Heart left ventricle (tissue), 16 donors: ENCODE measurements at regions of chr18 and their contacts with region 1.

Region 1: DNA sequence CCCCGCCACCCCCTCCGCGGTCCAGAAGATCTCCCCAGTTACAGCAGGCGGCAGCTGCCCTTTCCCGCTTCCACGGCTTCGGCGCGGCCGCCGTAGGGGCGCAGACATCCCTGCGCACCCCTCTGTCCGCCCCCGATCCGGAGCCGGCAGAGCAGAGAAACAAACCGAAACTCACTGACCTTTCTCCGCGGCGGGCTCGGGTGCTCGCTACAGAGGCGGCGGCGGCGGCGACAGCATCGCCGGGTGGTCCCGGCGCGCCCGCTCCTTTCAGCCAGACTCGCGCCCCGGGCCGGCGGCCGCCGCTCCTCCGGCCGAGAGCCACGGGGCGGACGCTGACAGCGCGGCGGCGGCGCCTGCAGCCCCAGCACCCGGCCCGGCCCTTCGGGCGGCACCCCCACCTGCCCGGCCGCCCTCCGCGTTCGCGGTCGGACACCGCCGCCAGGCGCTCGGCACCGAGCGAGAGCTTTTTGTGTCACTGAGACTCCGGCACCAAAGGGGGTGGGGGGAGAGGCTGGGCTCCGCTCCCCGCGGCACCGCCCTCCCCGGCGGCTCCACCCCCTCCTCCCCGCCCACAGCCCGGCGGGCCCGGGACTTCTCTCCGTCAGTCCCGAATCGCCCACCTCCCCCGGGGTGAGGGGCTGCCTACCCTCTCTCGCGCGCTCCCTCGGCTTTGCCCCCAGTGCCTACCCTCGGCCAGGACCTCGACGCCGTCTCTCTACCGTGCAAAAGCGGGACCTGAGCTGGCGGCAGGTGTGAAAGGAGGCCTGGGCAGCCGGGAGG is 1.4 kb upstream of the RNF152 start:
- DNase-seq: peak; percentile 87 to 92 (median 89)
- ATAC-seq: peak; percentile 92 to 95 (median 94)
- H3K4me3 ChIP-seq: peak overlapping the region; percentile 74 to 99 (median 93)
- H3K27ac ChIP-seq: peak overlapping the region; percentile 80 to 97 (median 90)
- H3K4me1 ChIP-seq: peaks cover 0 to 43% (median 8%) of the 10 kb centered on the region in 12 donors
- H3K27me3 ChIP-seq: peaks cover 0 to 38% (median 0%) of the 10 kb centered on the region in 9 donors
- CTCF ChIP-seq: peak; percentile 7 to 67 (median 46)
- POLR2A ChIP-seq: peak in 1 of 2 donors; percentile 70

Region 2: DNA sequence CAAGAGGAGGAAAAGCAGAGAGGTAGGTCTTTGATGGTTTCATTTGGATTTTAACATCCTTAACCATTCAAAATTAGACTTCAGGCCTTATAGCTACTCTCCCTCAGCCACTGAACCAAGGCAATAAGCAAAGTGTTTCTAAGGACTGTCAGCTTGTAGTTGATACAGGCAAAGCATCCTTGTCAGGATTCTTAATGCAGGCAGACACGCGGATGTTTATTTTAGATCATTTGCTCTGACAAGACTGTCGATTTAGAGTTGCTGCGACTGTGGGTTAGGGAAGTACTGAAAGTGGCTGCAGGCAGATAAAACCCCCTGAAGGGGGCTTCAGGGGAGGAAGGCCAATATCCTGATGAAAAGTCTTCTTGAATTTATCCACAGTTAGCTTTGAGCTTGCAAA is 514.3 kb before region 1 on chr18:
- intact Hi-C with region 1: no loop called
- DNase-seq: no peak
- ATAC-seq: no peak
- H3K4me3 ChIP-seq: no peak overlapping the region
- H3K27ac ChIP-seq: no peak overlapping the region
- H3K4me1 ChIP-seq: no peaks in the 10 kb centered on the region
- H3K27me3 ChIP-seq: no peaks in the 10 kb centered on the region
- CTCF ChIP-seq: no peak
- POLR2A ChIP-seq: no peak

Region 3: DNA sequence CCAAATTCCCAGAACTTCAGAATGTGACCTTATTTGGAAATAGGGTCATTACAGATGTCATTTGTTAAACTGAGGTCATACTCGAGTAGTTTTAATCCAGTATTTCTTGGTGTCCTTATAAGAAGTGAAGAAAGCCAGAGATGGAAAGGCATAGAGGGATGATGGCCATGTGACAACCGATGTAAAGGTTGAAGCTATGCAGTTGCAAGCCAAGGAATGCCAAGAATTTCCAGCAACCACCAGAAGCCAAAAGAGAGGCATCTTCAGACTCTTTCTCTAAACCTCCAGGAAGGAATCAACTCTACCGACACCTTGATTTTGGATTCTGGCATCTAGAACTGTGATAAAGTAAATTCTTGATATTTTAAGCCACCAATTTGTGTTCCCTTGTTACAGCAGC is 318.7 kb before region 1 on chr18:
- intact Hi-C with region 1: loop called in 5 of 10 experiments (anchors 5 to 10 kb)
- DNase-seq: no peak
- ATAC-seq: no peak
- H3K4me3 ChIP-seq: no peak overlapping the region
- H3K27ac ChIP-seq: no peak overlapping the region
- H3K4me1 ChIP-seq: peaks cover 0 to 17% (median 7%) of the 10 kb centered on the region in 12 donors
- H3K27me3 ChIP-seq: no peaks in the 10 kb centered on the region
- CTCF ChIP-seq: no peak
- POLR2A ChIP-seq: no peak

Region 4: GRCh38 chr18:61635901-61636528 is 258.1 kb before region 1 on chr18:
- intact Hi-C with region 1: loop called in 8 of 10 experiments (anchors 1 to 5 kb)
- DNase-seq: peak; percentile 35 to 64 (median 50)
- ATAC-seq: peak; percentile 51 to 87 (median 80)
- H3K4me3 ChIP-seq: no peak overlapping the region
- H3K27ac ChIP-seq: peak overlapping the region in 10 of 12 donors; percentile 8 to 73 (median 36)
- H3K4me1 ChIP-seq: peaks cover 0 to 14% (median 6%) of the 10 kb centered on the region in 12 donors
- H3K27me3 ChIP-seq: no peaks in the 10 kb centered on the region
- CTCF ChIP-seq: peak; percentile 74 to 93 (median 87)
- POLR2A ChIP-seq: no peak

Region 5: GRCh38 chr18:61731693-61732376 is 162.3 kb before region 1 on chr18:
- intact Hi-C with region 1: loop called in 1 of 10 experiments (anchors 5 kb)
- DNase-seq: peak in 4 of 5 donors; percentile 33 to 41 (median 38)
- ATAC-seq: peak; percentile 68 to 71 (median 68)
- H3K4me3 ChIP-seq: no peak overlapping the region
- H3K27ac ChIP-seq: peak overlapping the region; percentile 51 to 93 (median 79)
- H3K4me1 ChIP-seq: peaks cover 0 to 37% (median 13%) of the 10 kb centered on the region in 12 donors
- H3K27me3 ChIP-seq: peaks cover 0 to 2% (median 0%) of the 10 kb centered on the region in 9 donors
- CTCF ChIP-seq: no peak
- POLR2A ChIP-seq: no peak

Region 6: GRCh38 chr18:61755555-61755954 is 138.6 kb before region 1 on chr18:
- intact Hi-C with region 1: loop called in 1 of 10 experiments (anchors 5 kb)
- DNase-seq: no peak
- ATAC-seq: no peak
- H3K4me3 ChIP-seq: no peak overlapping the region
- H3K27ac ChIP-seq: no peak overlapping the region
- H3K4me1 ChIP-seq: peaks cover 0 to 24% (median 7%) of the 10 kb centered on the region in 12 donors
- H3K27me3 ChIP-seq: no peaks in the 10 kb centered on the region
- CTCF ChIP-seq: no peak
- POLR2A ChIP-seq: no peak

Region 7: DNA sequence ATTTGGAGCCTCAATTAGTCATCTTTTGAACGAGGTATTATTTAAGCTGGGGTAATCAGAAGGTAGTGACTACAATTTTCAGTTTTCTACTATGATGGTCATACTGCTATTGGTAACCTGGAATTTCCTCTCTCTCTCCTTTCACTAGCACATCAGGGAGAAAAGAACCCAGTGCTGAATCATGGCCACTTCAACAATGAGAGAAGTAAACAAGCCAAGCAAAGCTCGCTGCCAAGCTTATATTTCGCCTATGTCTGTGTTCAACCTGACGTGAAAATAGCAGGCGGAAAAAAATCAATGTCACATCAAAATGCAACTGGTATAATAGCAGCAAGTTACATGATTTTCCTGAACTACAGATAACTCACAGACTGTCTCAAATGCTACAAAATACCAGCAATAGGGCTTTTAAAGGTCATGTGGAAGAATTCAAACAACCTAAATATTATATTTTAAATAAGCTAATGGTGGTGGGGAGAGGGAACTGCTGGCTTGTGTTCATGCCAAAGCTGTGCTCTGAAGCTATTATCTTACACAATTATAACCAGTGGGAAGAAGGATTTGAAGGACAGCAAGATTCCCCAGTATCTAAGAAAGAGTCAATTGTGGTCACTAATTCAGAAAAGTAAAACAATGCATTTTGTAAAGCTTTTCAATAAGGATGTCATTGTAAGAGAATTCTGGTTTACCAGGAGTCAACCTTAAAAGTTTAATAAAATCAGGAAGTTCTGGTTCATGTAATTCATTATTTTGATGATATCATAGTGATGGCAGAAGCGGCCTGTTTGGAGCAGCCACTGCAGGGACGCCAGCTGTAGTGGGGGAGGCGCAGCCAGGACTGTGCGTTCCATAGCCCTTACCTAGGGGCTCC is 39.3 kb before region 1 on chr18:
- intact Hi-C with region 1: no loop called
- DNase-seq: no peak
- ATAC-seq: peak in 1 of 4 donors; percentile 33
- H3K4me3 ChIP-seq: no peak overlapping the region
- H3K27ac ChIP-seq: peak overlapping the region in 1 of 12 donors; percentile 16
- H3K4me1 ChIP-seq: peaks cover 0 to 82% (median 24%) of the 10 kb centered on the region in 12 donors
- H3K27me3 ChIP-seq: no peaks in the 10 kb centered on the region
- CTCF ChIP-seq: no peak
- POLR2A ChIP-seq: no peak

Region 8: GRCh38 chr18:62131301-62131909 is 237.2 kb after region 1 on chr18:
- intact Hi-C with region 1: loop called in 2 of 10 experiments (anchors 10 kb)
- DNase-seq: peak in 4 of 5 donors; percentile 30 to 53 (median 40)
- ATAC-seq: peak in 3 of 4 donors; percentile 50 to 71 (median 64)
- H3K4me3 ChIP-seq: no peak overlapping the region
- H3K27ac ChIP-seq: no peak overlapping the region
- H3K4me1 ChIP-seq: no peaks in the 10 kb centered on the region
- H3K27me3 ChIP-seq: no peaks in the 10 kb centered on the region
- CTCF ChIP-seq: peak; percentile 81 to 98 (median 94)
- POLR2A ChIP-seq: no peak